Naive thymus-derived CD8-positive, alpha-beta T cell (primary cell): ENCODE measurements at regions of chr1 and their contacts with region 1.

Region 1: GRCh38 chr1:205300886-205301821 is 20.4 kb downstream of the NUAK2 start:
- DNase-seq: no peak
- ATAC-seq: no peak
- H3K4me3 Mint-ChIP-seq: peak overlapping the region in 1 of 10 donors; percentile 59
- H3K27ac Mint-ChIP-seq: peak overlapping the region in 9 of 10 donors; percentile 31 to 87 (median 68)
- H3K4me1 Mint-ChIP-seq: peaks cover 25 to 77% (median 71%) of the 10 kb centered on the region in 4 donors
- H3K27me3 Mint-ChIP-seq: no peaks in the 10 kb centered on the region

Region 2: GRCh38 chr1:205313563-205314308 is 12.6 kb after region 1 on chr1:
- POLR2A ChIA-PET with region 1: interaction called, 259 read pairs
- DNase-seq: peak; percentile 29 to 75 (median 56)
- ATAC-seq: peak; percentile 76 to 87
- H3K4me3 Mint-ChIP-seq: peak overlapping the region; percentile 79 to 100 (median 95)
- H3K27ac Mint-ChIP-seq: peak overlapping the region; percentile 92 to 99 (median 98)
- H3K4me1 Mint-ChIP-seq: peaks cover 51 to 98% (median 96%) of the 10 kb centered on the region in 4 donors
- H3K27me3 Mint-ChIP-seq: no peaks in the 10 kb centered on the region

Region 3: DNA sequence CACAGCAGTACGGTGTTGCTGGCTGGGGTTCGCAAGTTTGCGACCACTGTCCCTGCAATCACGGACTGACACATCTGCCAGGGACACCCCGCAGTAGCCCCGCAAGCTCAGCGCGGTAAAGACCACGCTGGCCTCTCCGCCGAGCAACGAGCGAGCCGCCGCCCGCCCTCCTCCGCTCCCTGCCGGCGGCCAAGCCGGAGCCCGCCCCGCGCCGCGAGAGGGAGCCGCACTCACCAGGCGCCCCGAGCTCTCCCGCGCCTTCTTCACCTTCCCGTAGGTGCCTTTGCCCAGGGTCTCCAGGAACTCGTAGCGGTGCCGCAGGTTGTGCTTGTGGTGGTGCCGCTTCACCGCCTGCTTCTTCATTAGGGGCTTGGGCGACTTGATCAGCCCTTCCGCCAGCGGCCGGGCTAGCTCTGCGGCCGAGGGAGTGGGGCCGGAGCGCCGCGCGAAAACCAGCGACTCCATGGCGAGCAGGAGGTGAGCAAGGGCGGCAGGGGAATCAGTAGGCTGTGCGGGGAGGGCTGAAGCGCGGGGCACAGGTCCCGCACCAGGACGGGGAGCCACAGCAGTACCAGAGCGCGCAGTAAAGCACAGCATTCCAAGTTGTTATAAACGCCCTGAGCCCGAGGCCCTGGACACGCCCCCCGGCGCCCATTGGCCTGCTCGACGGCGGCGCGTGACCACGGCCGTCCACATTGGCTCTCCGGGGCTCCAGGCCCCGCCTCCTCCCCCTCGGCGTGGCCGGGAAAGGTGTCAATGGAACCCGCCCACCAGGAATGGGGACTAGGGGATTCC is 20.2 kb after region 1 on chr1 and contains the start of gene NUAK2:
- POLR2A ChIA-PET with region 1: interaction called, 259 read pairs
- DNase-seq: peak; percentile 80 to 91 (median 84)
- ATAC-seq: peak; percentile 87 to 93
- H3K4me3 Mint-ChIP-seq: peak within 1 kb of the TSS; percentile 92 to 100 (median 98)
- H3K27ac Mint-ChIP-seq: peak within 1 kb of the TSS; percentile 83 to 99 (median 96)
- H3K4me1 Mint-ChIP-seq: peaks cover 46 to 83% (median 70%) of the 10 kb centered on the region in 4 donors
- H3K27me3 Mint-ChIP-seq: peaks cover 0 to 2% (median 0%) of the 10 kb centered on the region in 5 donors
- polyA plus RNA-seq, gene NUAK2: 14.3 to 73.6 (median 34.0) TPM